Dendritic cell treated with granulocyte-macrophage colony-stimulating factor and Interleukin-4, amounts not matched to agents 40 ng/mL and 50 ng/mL, for 4 days (primary cell): ENCODE measurements at regions of chr10 and their contacts with region 1.

Region 1: DNA sequence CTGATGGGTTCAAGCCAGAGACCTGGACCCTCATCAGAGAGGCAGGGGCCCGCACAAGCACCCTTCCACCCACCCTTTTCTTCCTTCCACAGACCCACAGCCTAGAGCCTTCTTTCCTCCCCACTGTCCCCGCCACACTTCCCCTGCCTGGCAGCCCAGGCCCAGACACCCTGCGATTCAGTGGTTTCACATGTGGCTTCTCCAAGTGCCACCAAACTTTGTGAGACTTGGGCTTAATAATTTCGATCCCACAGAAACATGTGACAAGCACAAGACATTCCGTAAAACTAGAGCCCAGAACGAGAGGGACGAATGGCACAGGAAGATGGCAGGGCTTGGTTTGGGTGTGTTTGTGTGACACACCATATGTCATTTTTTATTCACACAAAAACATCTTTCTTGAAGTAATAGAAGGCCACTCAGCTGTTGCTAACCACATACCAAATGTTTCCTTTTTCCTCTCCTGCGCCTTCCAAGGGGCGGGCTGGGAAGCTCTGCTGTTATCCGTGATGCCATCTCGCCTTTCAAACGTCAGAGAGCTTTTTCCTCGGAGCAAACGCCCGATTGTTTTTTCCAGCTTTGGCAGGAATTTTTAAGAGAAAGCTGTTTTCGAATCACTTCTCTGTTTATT is 162.9 kb downstream of the GRK5 start:
- H3K4me3 Mint-ChIP-seq: no peak overlapping the region
- H3K27ac Mint-ChIP-seq: peak overlapping the region; percentile 70
- H3K4me1 Mint-ChIP-seq: peaks cover 44% of the 10 kb centered on the region
- H3K27me3 Mint-ChIP-seq: peaks cover 6% of the 10 kb centered on the region

Region 2: DNA sequence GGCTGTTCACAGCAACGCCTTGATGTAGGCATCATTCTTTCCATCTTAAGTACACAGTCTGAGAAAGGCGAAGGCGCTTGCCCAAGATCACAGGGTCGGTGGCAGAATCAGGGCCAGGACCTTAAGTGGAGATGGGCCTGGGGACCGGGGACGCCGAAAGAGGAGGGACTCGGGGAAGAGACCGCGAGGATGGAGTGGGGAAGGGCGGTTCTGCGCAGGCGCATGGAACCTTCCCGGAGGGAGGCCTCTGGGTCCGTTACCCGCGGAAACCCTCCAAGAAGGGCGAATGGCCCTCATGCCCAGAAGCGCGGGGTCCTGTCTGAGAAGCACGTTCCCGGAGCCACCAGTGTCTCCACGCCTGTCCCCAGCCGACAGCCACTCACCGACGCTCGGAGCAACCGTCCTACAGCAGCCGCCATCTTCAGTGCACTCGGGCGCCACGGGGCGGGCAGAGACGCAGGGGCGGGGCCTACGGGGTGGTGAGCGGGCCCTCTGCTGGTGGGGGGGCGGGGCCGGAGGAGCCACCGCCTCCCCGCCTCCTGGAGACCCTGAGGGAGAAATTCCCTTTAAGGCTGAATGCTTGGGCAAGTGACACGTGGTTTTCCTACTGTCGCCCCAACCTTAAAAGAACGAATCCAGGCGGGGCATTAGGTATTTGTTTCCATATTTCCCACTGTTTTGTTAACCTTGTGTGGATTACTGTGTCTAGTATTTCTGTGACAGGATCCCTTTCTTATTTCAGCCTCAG is 191.7 kb before region 1 on chr10 and contains the start of gene PRDX3:
- intact Hi-C with region 1: no loop called
- H3K4me3 Mint-ChIP-seq: peak within 1 kb of the TSS; percentile 98
- H3K27ac Mint-ChIP-seq: peak within 1 kb of the TSS; percentile 94
- H3K4me1 Mint-ChIP-seq: peaks cover 35% of the 10 kb centered on the region
- H3K27me3 Mint-ChIP-seq: no peaks in the 10 kb centered on the region

Region 3: GRCh38 chr10:119409866-119410299 is 39.7 kb after region 1 on chr10:
- intact Hi-C with region 1: loop called (anchors 5 kb)
- H3K4me3 Mint-ChIP-seq: no peak overlapping the region
- H3K27ac Mint-ChIP-seq: peak overlapping the region; percentile 27
- H3K4me1 Mint-ChIP-seq: peaks cover 36% of the 10 kb centered on the region
- H3K27me3 Mint-ChIP-seq: no peaks in the 10 kb centered on the region